ENCODE measurements at regions of chr1 and their contacts with region 1.

Region 1: GRCh38 chr1:174074757-174075156 is 52.6 kb upstream of the RC3H1 start:
- DNase-seq: no peak
- H3K4me3 ChIP-seq: no peak overlapping the region
- H3K27ac ChIP-seq: no peak overlapping the region
- H3K4me1 ChIP-seq: no peaks in the 10 kb centered on the region
- H3K27me3 ChIP-seq: no peaks in the 10 kb centered on the region
- CTCF ChIP-seq: peak; percentile 28 to 42

Region 2: GRCh38 chr1:173420330-173420806 is 654.4 kb before region 1 on chr1:
- CTCF ChIA-PET with region 1: no interaction called
- dilution Hi-C with region 1: no loop called
- in situ Hi-C with region 1: no loop called
- intact Hi-C with region 1: loop called (anchors 1 kb)
- DNase-seq: peak; percentile 68
- H3K4me3 ChIP-seq: no peak overlapping the region
- H3K27ac ChIP-seq: no peak overlapping the region
- H3K4me1 ChIP-seq: peaks cover 19% of the 10 kb centered on the region
- H3K27me3 ChIP-seq: no peaks in the 10 kb centered on the region
- CTCF ChIP-seq: peak; percentile 77 to 85

Region 3: GRCh38 chr1:173970252-173970651 is 104.5 kb before region 1 on chr1:
- CTCF ChIA-PET with region 1: no interaction called
- dilution Hi-C with region 1: no loop called
- in situ Hi-C with region 1: no loop called
- intact Hi-C with region 1: loop called (anchors 10 kb)
- DNase-seq: no peak
- H3K4me3 ChIP-seq: no peak overlapping the region
- H3K27ac ChIP-seq: no peak overlapping the region
- H3K4me1 ChIP-seq: no peaks in the 10 kb centered on the region
- H3K27me3 ChIP-seq: no peaks in the 10 kb centered on the region
- CTCF ChIP-seq: no peak

Region 4: DNA sequence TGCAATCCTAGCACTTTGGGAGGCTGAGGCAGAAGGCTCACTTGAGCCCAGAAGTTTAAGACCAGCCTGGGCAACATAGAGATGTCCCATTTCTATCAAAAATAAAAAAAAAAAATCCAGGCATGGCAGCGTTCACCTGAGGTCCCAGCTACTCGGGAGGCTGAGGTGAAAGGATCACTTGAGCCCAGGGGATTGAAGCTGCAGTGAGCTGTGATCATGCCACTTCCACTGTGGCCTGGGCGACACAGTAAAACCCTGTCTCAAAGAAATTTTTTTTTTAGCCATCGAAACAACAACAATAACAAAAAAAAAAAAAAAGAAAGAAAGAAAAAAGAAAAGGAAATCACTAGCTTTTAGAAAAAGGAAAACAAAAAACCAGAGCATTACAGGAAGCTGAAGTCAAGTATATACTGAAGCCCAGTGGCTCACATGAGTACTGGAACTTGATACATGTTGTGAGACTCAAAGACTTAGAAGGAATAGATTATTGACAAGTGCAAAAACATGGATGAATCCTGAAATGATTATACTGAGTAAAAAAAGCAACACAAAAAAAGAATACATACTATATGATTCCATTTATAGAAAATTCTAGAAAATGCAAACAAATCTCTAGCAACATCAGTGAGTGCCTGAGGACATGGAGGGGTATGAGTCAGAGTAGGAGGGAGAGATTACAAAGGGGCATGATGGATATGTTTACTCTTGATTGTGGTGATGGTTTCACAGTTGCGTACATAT is 78.5 kb after region 1 on chr1:
- CTCF ChIA-PET with region 1: no interaction called
- dilution Hi-C with region 1: no loop called
- in situ Hi-C with region 1: no loop called
- intact Hi-C with region 1: no loop called
- DNase-seq: peak; percentile 75
- H3K4me3 ChIP-seq: no peak overlapping the region
- H3K27ac ChIP-seq: no peak overlapping the region
- H3K4me1 ChIP-seq: peaks cover 25% of the 10 kb centered on the region
- H3K27me3 ChIP-seq: no peaks in the 10 kb centered on the region
- CTCF ChIP-seq: peak in 1 of 2 donors; percentile 15

Region 5: DNA sequence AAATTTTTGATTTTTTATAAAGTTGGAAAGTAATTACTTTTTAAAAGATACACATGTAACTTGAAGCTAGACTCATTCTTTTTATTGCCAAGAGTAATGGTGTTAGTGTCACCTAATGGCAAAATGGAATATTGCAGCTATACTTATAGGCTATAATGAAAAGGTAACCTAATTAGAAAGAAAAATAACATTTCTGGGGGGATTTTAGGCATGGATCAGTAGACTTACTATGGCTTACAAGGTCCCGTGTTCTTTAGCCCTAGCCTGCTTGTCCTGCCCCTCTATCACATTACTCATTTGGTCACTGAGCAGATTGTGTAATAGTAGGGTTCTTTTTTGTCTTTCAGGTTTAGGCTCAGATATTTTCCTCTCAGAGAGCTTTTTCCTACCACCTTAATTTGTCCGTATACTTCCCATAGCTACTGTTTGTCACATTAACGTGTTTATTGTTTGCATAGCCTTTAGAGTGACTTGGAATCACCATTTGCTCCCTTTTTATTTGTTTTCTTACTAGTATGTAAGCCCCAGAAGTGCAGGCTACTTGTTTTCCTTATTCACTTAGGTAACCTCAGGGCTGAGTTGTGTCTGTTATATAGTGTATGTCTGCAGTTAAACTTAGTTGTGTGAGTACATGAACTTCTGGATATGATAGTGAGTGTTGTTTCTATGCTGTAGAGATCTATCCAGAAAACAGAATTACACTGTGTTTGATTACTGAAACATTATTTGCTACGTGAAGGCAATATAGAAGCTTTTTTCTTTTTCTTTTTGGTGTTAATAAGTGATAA is 143.2 kb after region 1 on chr1:
- CTCF ChIA-PET with region 1: no interaction called
- dilution Hi-C with region 1: no loop called
- in situ Hi-C with region 1: no loop called
- intact Hi-C with region 1: loop called (anchors 5 kb)
- DNase-seq: peak; percentile 27
- H3K4me3 ChIP-seq: no peak overlapping the region
- H3K27ac ChIP-seq: no peak overlapping the region
- H3K4me1 ChIP-seq: peaks cover 15% of the 10 kb centered on the region
- H3K27me3 ChIP-seq: no peaks in the 10 kb centered on the region
- CTCF ChIP-seq: peak; percentile 72 to 86

Region 6: GRCh38 chr1:174743654-174744561 is 669.2 kb after region 1 on chr1:
- CTCF ChIA-PET with region 1: no interaction called
- dilution Hi-C with region 1: no loop called
- in situ Hi-C with region 1: loop called in 1 of 2 experiments (anchors 25 kb)
- intact Hi-C with region 1: no loop called
- DNase-seq: peak; percentile 28
- H3K4me3 ChIP-seq: no peak overlapping the region
- H3K27ac ChIP-seq: no peak overlapping the region
- H3K4me1 ChIP-seq: no peaks in the 10 kb centered on the region
- H3K27me3 ChIP-seq: no peaks in the 10 kb centered on the region
- CTCF ChIP-seq: peak; percentile 54 to 55